ENCODE measurements at regions of chr10 and their contacts with region 1.

Region 1: GRCh38 chr10:125936331-125936730 is 40.0 kb downstream of the FANK1 start:
- DNase-seq: no peak
- ATAC-seq: no peak
- H3K4me3 ChIP-seq: no peak overlapping the region
- H3K27ac ChIP-seq: no peak overlapping the region
- H3K4me1 ChIP-seq: peaks cover 6% of the 10 kb centered on the region; the same call in 2 of the 3 replicates
- CTCF ChIP-seq: no peak
- EP300 ChIP-seq: no peak
- POLR2A ChIP-seq: no peak
- RAD21 ChIP-seq: no peak

Region 2: GRCh38 chr10:125911975-125912374 is 24.4 kb before region 1 on chr10:
- CTCF ChIA-PET with region 1: no interaction called
- POLR2A ChIA-PET with region 1: no interaction called
- DNase-seq: peak in 1 of 2 experiments; percentile 76
- ATAC-seq: peak in 1 of 2 experiments; percentile 80; a peak in 3 of 6 replicates
- H3K4me3 ChIP-seq: no peak overlapping the region
- H3K27ac ChIP-seq: no peak overlapping the region
- H3K4me1 ChIP-seq: peaks cover 10% of the 10 kb centered on the region; the same call in 2 of the 3 replicates
- CTCF ChIP-seq: no peak
- EP300 ChIP-seq: no peak
- POLR2A ChIP-seq: no peak
- RAD21 ChIP-seq: no peak

Region 3: GRCh38 chr10:125976960-125977603 is 40.8 kb after region 1 on chr10:
- CTCF ChIA-PET with region 1: interaction called, 14 read pairs
- POLR2A ChIA-PET with region 1: no interaction called
- DNase-seq: no peak
- ATAC-seq: no peak
- H3K4me3 ChIP-seq: no peak overlapping the region
- H3K27ac ChIP-seq: peak overlapping the region in 1 of 2 experiments; percentile 24; a peak in 2 of 6 replicates
- H3K4me1 ChIP-seq: peaks cover 18% of the 10 kb centered on the region
- CTCF ChIP-seq: no peak
- EP300 ChIP-seq: no peak
- POLR2A ChIP-seq: no peak
- RAD21 ChIP-seq: no peak

Region 4: DNA sequence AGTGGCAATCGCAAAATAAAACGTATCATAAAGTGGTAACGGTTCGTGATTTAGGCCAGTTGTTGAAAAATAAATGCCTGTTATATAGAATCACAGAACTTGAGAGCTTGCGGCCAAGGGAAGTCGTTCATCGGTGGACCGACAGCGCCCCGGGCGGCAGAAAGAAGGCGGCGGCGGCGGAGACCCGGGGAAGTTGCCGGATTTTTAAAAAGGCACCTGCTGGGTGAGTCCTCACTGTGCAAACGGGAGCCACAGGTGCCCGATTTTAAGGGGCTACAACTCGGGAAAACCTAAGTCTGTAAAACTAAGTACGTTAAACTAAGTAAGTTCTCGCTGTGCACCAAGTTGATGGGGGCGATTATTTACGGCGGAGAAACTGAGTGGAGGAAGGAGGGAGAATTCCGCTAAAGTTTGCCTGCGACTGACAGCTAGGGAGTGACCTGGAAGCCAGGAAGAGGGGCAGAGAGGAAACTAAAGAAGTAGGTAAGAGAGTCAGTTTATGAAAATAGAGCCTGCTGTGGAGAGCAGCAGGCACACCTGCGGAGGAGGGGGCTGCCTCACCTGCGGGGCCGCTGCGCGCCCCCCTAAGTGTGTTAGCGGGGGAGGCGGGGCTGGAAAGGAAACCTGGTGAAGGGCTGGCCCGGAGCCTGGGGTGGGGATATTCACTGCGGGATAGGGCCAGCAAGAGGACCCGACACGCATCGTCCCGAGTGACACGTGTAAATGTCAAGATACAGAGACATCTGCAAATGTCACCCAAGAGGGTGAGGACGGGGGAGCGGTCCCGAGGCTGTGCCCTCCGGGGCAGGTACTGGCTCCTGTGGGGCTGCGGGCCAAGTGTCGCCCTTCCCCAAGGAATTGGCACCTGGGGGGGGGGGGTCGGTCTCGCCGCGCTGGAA is 450.9 kb after region 1 on chr10:
- CTCF ChIA-PET with region 1: interaction called, 25 read pairs
- POLR2A ChIA-PET with region 1: no interaction called
- DNase-seq: peak; percentile 66 to 70
- ATAC-seq: peak; percentile 85 to 90
- H3K4me3 ChIP-seq: peak overlapping the region; percentile 61
- H3K27ac ChIP-seq: peak overlapping the region; percentile 63 to 93
- H3K4me1 ChIP-seq: no peaks in the 10 kb centered on the region
- CTCF ChIP-seq: peak; percentile 70
- EP300 ChIP-seq: no peak
- POLR2A ChIP-seq: no peak
- RAD21 ChIP-seq: peak; percentile 84 to 94

Region 5: DNA sequence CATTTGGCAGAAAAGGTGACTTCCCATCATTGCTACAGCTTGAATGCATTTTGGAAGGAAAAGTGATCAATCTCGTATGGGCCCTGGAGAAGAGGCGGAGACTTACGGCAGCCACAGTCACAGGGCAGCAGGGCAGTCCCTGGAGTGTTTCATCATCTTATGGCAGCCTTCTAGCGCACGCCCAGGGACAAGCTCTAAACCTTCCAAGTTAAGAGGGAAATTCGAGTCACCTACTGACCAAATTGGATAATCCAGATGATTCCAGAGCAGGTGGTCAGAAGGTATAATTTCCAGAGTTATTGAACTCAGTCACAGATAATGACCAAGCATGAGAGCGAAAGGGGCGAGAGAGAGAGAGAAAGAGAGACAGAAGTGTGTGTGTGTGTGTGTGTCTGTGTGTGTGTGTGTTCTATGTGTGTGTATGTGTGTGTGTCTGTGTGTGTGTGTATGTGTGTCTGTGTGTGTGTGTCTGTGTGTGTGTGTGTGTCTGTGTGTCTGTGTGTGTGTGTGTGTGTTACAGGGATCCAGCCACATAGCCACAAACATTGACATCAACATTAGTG is 575.7 kb after region 1 on chr10:
- CTCF ChIA-PET with region 1: interaction called, 17 read pairs
- POLR2A ChIA-PET with region 1: no interaction called
- DNase-seq: no peak
- ATAC-seq: peak in 1 of 2 experiments; percentile 51; a peak in 1 of 6 replicates
- H3K4me3 ChIP-seq: no peak overlapping the region
- H3K27ac ChIP-seq: 0 out of 6 replicates have a peak overlapping the region, but pooled peaks of 1 of the 2 experiments have one; percentile 22
- H3K4me1 ChIP-seq: no peaks in the 10 kb centered on the region
- CTCF ChIP-seq: no peak
- EP300 ChIP-seq: no peak
- POLR2A ChIP-seq: no peak
- RAD21 ChIP-seq: no peak

Measured in A549 (cell line).